ENCODE measurements at regions of chr14 and their contacts with region 1.

Region 1: GRCh38 chr14:49959822-49960408 is 67.0 kb downstream of the ARF6 start:
- DNase-seq: peak; percentile 57
- CTCF ChIP-seq: no peak

Region 2: GRCh38 chr14:49977126-49977841 is 17.4 kb after region 1 on chr14:
- CTCF ChIA-PET with region 1: interaction called, 18 read pairs
- POLR2A ChIA-PET with region 1: no interaction called
- DNase-seq: peak; percentile 67
- CTCF ChIP-seq: no peak